HAP-1 (cell line): ENCODE measurements at regions of chr6 and their contacts with region 1.

Region 1: DNA sequence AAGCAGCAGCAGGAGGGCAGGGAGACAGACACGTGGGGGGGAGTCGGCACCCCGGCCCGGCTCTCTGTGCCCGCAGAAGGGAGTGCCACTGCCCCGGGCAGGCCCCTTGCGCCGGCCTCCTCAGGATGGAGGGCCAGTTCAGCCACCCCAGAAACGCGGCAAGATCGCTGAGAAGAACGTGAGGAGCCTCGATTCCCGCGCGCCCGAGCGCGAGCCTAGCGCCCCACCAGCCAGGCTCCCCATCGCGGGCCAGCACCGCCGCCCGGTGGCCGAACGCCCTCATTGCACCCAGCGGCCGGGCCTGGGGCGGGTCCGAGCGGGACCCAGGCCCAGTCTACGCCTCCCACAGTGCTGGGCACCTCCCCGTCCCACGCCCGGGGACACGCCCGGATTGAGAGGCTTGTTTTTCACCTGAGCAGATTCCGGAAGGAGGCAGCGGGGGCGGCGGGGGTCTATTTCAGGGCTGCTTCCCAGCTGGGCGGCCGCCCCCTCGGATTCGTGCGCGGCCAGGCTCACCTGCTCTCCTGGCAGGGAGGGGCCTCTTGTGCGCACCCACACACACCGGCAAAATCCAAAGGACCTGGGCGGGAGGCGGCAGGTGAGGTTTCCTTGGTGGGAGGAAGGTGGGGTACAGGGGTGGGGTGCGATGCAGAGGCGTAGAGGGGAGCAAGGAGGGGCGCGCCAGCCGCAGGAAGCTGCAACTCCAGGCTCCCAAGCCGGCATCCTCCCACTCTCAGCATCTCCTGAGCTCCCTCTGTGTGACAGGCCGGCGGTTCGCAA is 9.0 kb upstream of the GRM4 start:
- DNase-seq: peak; percentile 42 to 86
- H3K4me3 ChIP-seq: peak overlapping the region; percentile 18
- H3K4me1 ChIP-seq: peaks cover 3% of the 10 kb centered on the region; the same call in 1 of the 2 replicates
- H3K27me3 ChIP-seq: no peaks in the 10 kb centered on the region; the same call in 1 of the 2 replicates

Region 2: DNA sequence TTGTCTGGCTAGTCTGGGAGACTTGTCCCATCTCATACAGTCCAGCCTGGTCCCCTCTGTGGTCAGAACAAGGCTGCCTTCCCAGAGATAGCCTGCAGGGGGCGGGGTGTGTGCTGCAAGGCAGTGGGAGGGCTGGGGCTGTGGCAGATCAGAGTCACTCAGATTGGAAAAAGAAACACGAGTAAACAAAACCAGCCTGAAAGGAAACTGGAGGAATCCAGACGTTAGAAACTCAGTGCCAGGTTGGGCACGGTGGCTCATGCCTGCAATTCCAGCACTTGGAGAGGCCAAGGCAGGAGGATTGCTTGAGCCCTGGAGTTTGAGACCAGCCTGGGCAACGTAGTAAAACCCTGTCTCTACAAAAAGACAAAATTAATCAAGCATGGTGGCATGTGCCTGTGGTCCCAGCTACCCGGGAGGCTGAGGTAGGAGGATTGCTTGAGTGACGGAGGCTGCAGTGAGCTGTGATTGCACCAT is 386.2 kb before region 1 on chr6:
- in situ Hi-C with region 1: loop called (anchors 10 kb)
- DNase-seq: peak; percentile 50 to 94
- H3K4me3 ChIP-seq: no peak overlapping the region
- H3K4me1 ChIP-seq: peaks cover 3% of the 10 kb centered on the region
- H3K27me3 ChIP-seq: no peaks in the 10 kb centered on the region

Region 3: GRCh38 chr6:34055223-34055933 is 99.5 kb before region 1 on chr6:
- in situ Hi-C with region 1: loop called (anchors 5 kb)
- DNase-seq: peak; percentile 53 to 88
- H3K4me3 ChIP-seq: no peak overlapping the region
- H3K4me1 ChIP-seq: no peaks in the 10 kb centered on the region
- H3K27me3 ChIP-seq: no peaks in the 10 kb centered on the region